ENCODE measurements at regions of chr7 and their contacts with region 1.

Region 1: DNA sequence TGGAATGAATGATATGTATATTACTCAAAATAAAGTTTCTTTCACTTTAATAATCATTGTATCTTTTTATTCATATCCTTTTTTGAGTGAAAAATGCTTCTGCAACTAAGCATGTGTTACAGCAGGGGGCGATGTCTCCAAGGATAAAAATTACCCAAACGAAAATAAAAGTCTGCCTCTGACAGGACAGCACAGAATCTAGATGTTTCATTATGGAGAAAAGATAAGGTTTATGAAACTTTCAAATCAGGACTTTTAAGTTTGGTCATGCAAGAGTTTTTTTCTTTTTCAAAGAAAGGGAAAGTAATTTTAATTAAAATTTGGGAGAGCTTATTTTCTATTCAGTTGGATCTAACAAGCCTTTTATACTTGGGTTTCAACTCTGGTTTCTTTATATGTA is 48.4 kb downstream of the TES start:
- DNase-seq: peak; percentile 48
- ATAC-seq: no peak
- H3K4me3 ChIP-seq: no peak overlapping the region
- H3K27ac ChIP-seq: peak overlapping the region; percentile 74; the same call in 1 of the 2 replicates
- H3K4me1 ChIP-seq: peaks cover 43 to 58% of the 10 kb centered on the region in 2 experiments
- H3K27me3 ChIP-seq: no peaks in the 10 kb centered on the region
- CTCF ChIP-seq: peak; percentile 57 to 91 (median 81)
- POLR2A ChIP-seq: no peak
- RAD21 ChIP-seq: peak; percentile 96

Region 2: GRCh38 chr7:116340943-116341907 is 82.5 kb after region 1 on chr7:
- CTCF ChIA-PET with region 1: no interaction called
- POLR2A ChIA-PET with region 1: no interaction called
- RAD21 ChIA-PET with region 1: interaction called in 1 of 2 experiments, 3 read pairs
- intact Hi-C with region 1: loop called (anchors 2 kb)
- DNase-seq: no peak
- ATAC-seq: peak; percentile 88
- H3K4me3 ChIP-seq: no peak overlapping the region
- H3K27ac ChIP-seq: peak overlapping the region; percentile 2; the same call in 1 of the 2 replicates
- H3K4me1 ChIP-seq: peaks cover 20 to 34% of the 10 kb centered on the region in 2 experiments
- H3K27me3 ChIP-seq: no peaks in the 10 kb centered on the region
- CTCF ChIP-seq: peak; percentile 34 to 64 (median 61); a peak in 5 of 6 replicates
- POLR2A ChIP-seq: no peak
- RAD21 ChIP-seq: peak; percentile 68

Region 3: DNA sequence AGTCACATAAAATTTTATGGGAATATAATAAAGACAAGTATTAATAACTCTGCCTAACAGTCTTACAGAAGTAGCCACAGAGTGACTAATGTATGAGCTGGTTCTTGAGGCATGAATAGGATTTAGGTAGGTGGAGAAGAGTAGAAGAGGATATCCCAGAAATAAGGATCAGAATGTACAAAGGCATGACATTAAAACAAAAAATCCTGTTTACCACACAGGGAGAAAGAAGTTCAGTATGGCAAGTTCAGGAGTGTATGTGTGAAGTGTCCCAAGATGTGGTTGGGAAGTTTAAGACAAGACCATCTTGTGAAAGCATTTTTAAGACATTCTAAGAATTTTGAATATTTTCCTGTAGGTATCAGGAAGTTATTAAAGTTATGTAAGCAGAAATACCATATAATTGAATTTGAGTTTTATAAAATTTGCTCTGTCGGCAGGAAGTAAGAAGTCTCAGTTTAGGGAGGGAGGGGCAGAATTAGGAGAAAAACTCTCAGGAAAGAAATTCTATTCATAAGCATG is 176.1 kb after region 1 on chr7:
- CTCF ChIA-PET with region 1: no interaction called
- POLR2A ChIA-PET with region 1: no interaction called
- RAD21 ChIA-PET with region 1: no interaction called
- intact Hi-C with region 1: loop called (anchors 5 kb)
- DNase-seq: peak; percentile 53
- ATAC-seq: peak; percentile 79
- H3K4me3 ChIP-seq: 0 out of 4 replicates have a peak overlapping the region, but pooled peaks of 1 of the 2 experiments have one; percentile 3
- H3K27ac ChIP-seq: peak overlapping the region; percentile 96
- H3K4me1 ChIP-seq: peaks cover 59 to 85% of the 10 kb centered on the region in 2 experiments
- H3K27me3 ChIP-seq: no peaks in the 10 kb centered on the region
- CTCF ChIP-seq: no peak
- POLR2A ChIP-seq: no peak
- RAD21 ChIP-seq: peak; percentile 35

Region 4: GRCh38 chr7:116809636-116810266 is 551.0 kb after region 1 on chr7:
- CTCF ChIA-PET with region 1: interaction called, 3 read pairs
- POLR2A ChIA-PET with region 1: no interaction called
- RAD21 ChIA-PET with region 1: no interaction called
- intact Hi-C with region 1: loop called (anchors 5 kb)
- DNase-seq: peak; percentile 67
- ATAC-seq: peak; percentile 81
- H3K4me3 ChIP-seq: no peak overlapping the region
- H3K27ac ChIP-seq: peak overlapping the region; percentile 64
- H3K4me1 ChIP-seq: peaks cover 43 to 48% of the 10 kb centered on the region in 2 experiments
- H3K27me3 ChIP-seq: no peaks in the 10 kb centered on the region
- CTCF ChIP-seq: peak; percentile 43 to 86 (median 76); a peak in 4 of 6 replicates
- POLR2A ChIP-seq: no peak
- RAD21 ChIP-seq: peak; percentile 94